ENCODE measurements at regions of chr1 and their contacts with region 1.

Region 1: GRCh38 chr1:241519308-241520079 is at the start of gene FH:
- DNase-seq: peak; percentile 82 to 97 (median 92)
- ATAC-seq: peak; percentile 96 to 98 (median 97)
- H3K4me3 ChIP-seq: peak within 1 kb of the TSS; percentile 46 to 89
- H3K4me3 Mint-ChIP-seq: peak within 1 kb of the TSS in 2 of 3 donors; percentile 86 to 88
- H3K27ac ChIP-seq: peak within 1 kb of the TSS; percentile 16
- H3K27ac Mint-ChIP-seq: peak within 1 kb of the TSS; percentile 66 to 88
- H3K4me1 ChIP-seq: peaks cover 5 to 9% of the 10 kb centered on the region in 2 experiments
- H3K4me1 Mint-ChIP-seq: peaks cover 22 to 35% (median 23%) of the 10 kb centered on the region in 3 donors
- H3K27me3 ChIP-seq: no peaks in the 10 kb centered on the region
- H3K27me3 Mint-ChIP-seq: peaks cover 17 to 24% of the 10 kb centered on the region in 2 donors
- total RNA-seq, gene FH: 14.6 to 32.7 (median 28.2) TPM

Region 2: GRCh38 chr1:241560146-241560848 is 40.8 kb after region 1 on chr1:
- CTCF ChIA-PET with region 1: no interaction called
- POLR2A ChIA-PET with region 1: no interaction called
- DNase-seq: no peak
- ATAC-seq: no peak
- H3K4me3 ChIP-seq: no peak overlapping the region
- H3K4me3 Mint-ChIP-seq: no peak overlapping the region
- H3K27ac ChIP-seq: no peak overlapping the region
- H3K27ac Mint-ChIP-seq: no peak overlapping the region
- H3K4me1 ChIP-seq: no peaks in the 10 kb centered on the region
- H3K4me1 Mint-ChIP-seq: no peaks in the 10 kb centered on the region
- H3K27me3 ChIP-seq: peaks cover 0 to 8% of the 10 kb centered on the region in 2 experiments
- H3K27me3 Mint-ChIP-seq: no peaks in the 10 kb centered on the region

Region 3: DNA sequence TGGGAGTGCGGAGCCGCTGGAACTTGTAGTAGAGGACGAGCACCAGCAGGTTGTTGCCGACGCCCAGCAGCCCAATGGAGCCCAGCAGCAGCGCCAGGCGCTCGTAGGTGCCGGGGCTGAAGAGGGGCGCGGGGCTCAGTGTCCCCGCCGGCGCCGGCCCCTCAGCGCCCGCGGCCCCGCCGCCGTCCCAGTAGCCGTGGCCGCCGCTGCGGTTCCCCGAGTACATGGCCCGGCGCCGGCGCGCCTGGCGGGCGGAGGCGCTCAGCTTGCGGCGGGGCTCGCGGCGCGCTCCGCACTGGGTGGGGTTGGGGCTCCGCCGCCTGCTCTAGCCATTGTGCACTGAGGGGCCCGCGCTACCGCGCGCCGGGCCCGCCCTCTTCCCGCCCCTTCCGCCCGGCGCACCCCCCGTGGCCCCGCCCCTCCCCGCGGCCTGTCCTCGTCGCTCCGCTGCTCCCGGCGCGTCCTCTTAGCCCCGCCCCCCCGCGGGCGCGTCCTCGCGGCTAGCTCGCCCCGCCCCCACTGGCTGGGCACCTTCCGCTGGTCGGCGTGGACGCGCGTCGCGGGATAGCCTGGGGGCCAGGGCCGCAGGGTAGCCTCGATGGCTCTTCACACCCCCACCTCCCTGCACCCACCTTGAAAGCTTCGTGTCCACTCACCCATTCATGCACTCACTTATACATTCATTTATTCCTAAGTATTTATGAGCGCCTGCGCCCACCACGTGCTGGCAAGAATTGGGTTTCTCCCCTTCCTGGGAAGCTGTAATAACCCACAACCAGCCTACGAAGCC is 120.7 kb after region 1 on chr1 and contains the starts of genes CHML and OPN3:
- CTCF ChIA-PET with region 1: no interaction called
- POLR2A ChIA-PET with region 1: interaction called, 3 to 11 read pairs
- DNase-seq: peak; percentile 68 to 94 (median 83)
- ATAC-seq: peak; percentile 94 to 98 (median 94)
- H3K4me3 ChIP-seq: peak within 1 kb of the TSS; percentile 80 to 91
- H3K4me3 Mint-ChIP-seq: peak within 1 kb of the TSS; percentile 80 to 88 (median 83)
- H3K27ac ChIP-seq: peak within 1 kb of the TSS; percentile 56
- H3K27ac Mint-ChIP-seq: peak within 1 kb of the TSS; percentile 87 to 88
- H3K4me1 ChIP-seq: peaks cover 12 to 19% of the 10 kb centered on the region in 2 experiments
- H3K4me1 Mint-ChIP-seq: peaks cover 35 to 39% (median 39%) of the 10 kb centered on the region in 3 donors
- H3K27me3 ChIP-seq: no peaks in the 10 kb centered on the region
- H3K27me3 Mint-ChIP-seq: no peaks in the 10 kb centered on the region
- total RNA-seq, gene CHML: 6.5 to 15.8 (median 12.4) TPM
- total RNA-seq, gene OPN3: 4.1 to 8.8 (median 7.3) TPM

Region 4: DNA sequence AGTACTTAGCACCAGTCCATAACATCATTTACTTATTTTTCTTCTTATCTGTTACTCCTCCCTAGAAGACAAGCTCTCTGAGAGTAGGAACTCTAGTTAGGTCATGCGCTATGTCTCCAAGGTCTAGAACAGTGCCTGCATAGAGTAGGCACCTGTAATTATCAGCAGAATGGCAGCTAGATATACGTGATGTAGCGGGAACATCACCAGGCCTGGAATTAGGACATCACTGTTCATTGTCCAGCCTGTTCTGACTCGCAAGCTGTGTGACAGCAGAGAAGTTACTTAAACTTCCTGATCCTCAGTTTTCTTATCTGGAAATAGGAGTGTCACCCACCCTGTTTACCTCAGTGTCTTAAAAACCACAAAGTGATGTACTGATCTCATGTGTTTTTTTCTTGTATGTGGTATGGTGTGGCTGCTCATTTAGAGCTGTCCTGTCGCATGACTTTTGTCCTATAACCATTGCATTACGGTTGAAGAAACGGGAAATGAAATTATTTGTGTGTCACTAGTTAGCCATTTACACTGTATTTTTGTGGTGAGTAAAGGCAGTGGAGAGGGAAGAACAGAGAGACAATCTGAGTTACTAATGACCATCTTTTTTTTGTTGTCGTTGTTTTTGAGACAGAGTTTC is 291.4 kb after region 1 on chr1:
- CTCF ChIA-PET with region 1: no interaction called
- POLR2A ChIA-PET with region 1: no interaction called
- DNase-seq: no peak
- ATAC-seq: no peak
- H3K4me3 ChIP-seq: no peak overlapping the region
- H3K4me3 Mint-ChIP-seq: no peak overlapping the region
- H3K27ac ChIP-seq: no peak overlapping the region
- H3K27ac Mint-ChIP-seq: no peak overlapping the region
- H3K4me1 ChIP-seq: no peaks in the 10 kb centered on the region
- H3K4me1 Mint-ChIP-seq: no peaks in the 10 kb centered on the region
- H3K27me3 ChIP-seq: peaks cover 0 to 3% of the 10 kb centered on the region in 2 experiments
- H3K27me3 Mint-ChIP-seq: peaks cover 0 to 4% of the 10 kb centered on the region in 2 donors

Measured in T-cell (primary cell).